Heart right ventricle (tissue), 16 donors: ENCODE measurements at regions of chr3 and their contacts with region 1.

Region 1: DNA sequence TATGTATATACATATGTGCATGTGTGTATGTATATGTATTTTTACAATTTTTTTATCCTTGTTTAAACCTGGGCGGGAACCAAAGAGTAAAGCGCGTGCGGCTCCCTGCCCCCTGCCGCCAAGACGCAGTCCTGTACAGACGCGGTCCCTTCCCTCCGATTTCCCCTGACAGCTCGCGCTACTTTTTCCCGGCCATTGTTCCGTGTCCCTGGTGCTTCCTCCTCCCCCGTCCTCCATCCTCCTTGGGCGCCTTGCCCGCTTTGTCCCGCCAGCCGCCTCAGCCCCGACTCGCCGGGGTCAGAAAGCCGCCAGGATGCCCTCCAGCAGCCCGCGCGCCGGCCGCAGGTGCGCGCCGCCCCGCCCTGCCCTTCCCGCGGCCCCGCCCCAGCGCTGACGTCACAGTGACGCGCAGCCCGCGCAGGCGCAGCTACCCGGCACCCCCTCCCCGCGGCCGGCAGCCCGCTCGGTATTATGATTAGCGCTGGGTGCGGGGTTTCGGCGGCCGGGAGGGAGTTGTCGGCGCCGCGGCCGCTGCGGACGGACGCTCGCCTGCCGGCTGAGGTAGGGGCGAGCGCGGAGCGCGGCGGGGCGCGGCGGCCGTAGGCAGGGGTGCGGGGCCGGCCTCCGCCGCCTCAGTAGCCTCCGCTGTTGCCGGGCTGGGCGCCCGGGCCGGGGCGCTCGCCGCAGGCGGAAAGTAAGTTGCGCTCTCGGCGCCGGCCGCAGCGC is at the start of gene SNRK:
- DNase-seq: peak; percentile 91 to 95
- ATAC-seq: peak; percentile 90 to 98 (median 94)
- H3K4me3 ChIP-seq: peak within 1 kb of the TSS; percentile 38 to 74 (median 68)
- H3K27ac ChIP-seq: peak within 1 kb of the TSS; percentile 89 to 98 (median 93)
- H3K4me1 ChIP-seq: peaks cover 12 to 66% (median 44%) of the 10 kb centered on the region in 9 donors
- H3K27me3 ChIP-seq: no peaks in the 10 kb centered on the region
- CTCF ChIP-seq: peak in 7 of 9 donors; percentile 17 to 70 (median 38)
- total RNA-seq, gene SNRK: 20.9 to 51.9 (median 29.2) TPM

Region 2: DNA sequence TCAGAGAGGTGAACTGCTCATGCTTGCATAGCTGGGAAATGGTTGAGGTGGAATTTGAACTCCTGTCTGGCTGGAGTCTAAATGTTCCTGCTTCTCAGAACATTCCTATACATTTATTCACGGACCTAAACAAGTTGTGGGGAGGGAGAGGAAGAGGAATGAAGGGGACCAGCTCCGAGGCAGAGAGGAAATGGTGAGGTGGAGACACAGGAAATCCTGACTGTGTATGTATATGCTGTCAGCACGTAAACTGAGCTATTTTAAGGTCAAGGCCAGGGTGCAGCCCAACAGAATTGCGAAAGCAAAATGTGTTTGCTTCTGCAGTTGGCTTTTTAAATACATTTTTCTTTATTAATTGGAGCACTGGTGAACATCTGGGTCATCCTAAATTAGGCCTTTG is 106.3 kb before region 1 on chr3:
- intact Hi-C with region 1: loop called in 1 of 10 experiments (anchors 10 kb)
- DNase-seq: peak in 1 of 2 donors; percentile 32
- ATAC-seq: peak in 7 of 8 donors; percentile 55 to 87 (median 76)
- H3K4me3 ChIP-seq: no peak overlapping the region
- H3K27ac ChIP-seq: peak overlapping the region in 9 of 10 donors; percentile 27 to 79 (median 62)
- H3K4me1 ChIP-seq: peaks cover 3 to 57% (median 36%) of the 10 kb centered on the region in 9 donors
- H3K27me3 ChIP-seq: no peaks in the 10 kb centered on the region
- CTCF ChIP-seq: no peak

Region 3: GRCh38 chr3:43223670-43224364 is 62.5 kb before region 1 on chr3:
- intact Hi-C with region 1: loop called in 1 of 10 experiments (anchors 5 kb)
- DNase-seq: no peak
- ATAC-seq: peak in 1 of 8 donors; percentile 45
- H3K4me3 ChIP-seq: no peak overlapping the region
- H3K27ac ChIP-seq: no peak overlapping the region
- H3K4me1 ChIP-seq: no peaks in the 10 kb centered on the region
- H3K27me3 ChIP-seq: no peaks in the 10 kb centered on the region
- CTCF ChIP-seq: peak in 8 of 9 donors; percentile 21 to 72 (median 52)

Region 4: DNA sequence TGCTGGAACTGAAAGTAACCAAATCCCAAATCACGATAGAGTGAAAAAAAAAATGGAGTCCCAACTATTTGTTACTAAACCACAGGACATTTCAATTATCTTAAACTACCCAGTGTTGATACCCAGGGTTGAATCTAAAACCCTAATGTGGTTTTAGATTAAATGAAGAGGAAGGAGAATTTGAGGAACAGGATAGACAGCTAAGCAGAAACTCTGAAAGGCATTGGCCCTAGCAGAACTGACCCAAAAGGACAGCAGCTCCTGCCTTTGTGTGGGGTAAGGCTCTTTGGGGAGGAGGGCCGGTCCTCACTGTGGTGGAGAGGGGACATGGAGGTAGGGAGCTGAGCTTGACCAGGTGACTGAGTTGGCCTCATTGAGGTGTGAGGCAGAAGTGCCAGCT is 30.6 kb before region 1 on chr3:
- intact Hi-C with region 1: no loop called
- DNase-seq: no peak
- ATAC-seq: no peak
- H3K4me3 ChIP-seq: no peak overlapping the region
- H3K27ac ChIP-seq: peak overlapping the region in 1 of 10 donors; percentile 62
- H3K4me1 ChIP-seq: peaks cover 0 to 27% (median 0%) of the 10 kb centered on the region in 9 donors
- H3K27me3 ChIP-seq: no peaks in the 10 kb centered on the region
- CTCF ChIP-seq: no peak

Region 5: DNA sequence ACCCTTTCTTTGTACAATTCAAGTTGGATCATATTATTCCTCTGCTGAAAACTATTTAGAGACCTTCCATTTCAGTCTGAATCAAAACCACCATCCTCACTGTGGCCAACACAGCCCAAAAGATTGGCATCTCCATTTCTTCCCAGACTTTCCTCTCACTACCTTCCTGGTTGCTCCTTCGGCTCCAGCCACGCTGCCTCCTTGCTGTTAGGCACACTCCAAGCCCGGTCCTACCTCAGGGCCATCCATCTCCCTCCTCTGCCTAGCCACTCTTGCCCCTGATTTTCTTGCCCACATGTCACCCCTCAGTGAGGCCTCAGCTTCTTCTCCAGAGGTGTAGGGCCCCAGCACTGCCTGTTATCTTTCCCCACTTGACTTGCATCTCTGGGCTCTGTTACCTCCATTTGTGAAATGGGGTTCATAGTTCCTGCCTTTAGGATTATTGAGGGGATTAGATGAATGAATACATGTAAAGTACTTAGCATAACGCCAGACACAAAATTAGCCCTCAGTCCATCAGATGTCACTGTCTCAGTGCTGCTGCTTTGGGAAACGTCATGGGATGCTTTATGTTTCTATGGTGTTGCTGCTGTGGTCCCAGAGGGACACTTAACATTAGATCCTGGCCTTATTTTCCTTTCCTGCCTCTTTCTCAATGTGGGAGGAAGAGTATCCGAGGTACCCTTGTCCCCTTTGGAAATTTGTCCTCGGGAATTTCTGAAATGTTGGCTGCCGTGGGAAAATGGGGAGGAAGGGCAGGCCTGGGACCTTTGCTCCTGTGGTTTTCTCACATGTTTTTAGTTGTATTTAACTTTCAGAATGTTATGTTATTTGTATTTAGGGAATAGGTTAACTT is 31.4 kb after region 1 on chr3:
- intact Hi-C with region 1: loop called in 1 of 10 experiments (anchors 5 kb)
- DNase-seq: peak in 1 of 2 donors; percentile 38
- ATAC-seq: peak; percentile 63 to 89 (median 78)
- H3K4me3 ChIP-seq: no peak overlapping the region
- H3K27ac ChIP-seq: peak overlapping the region in 9 of 10 donors; percentile 39 to 85 (median 69)
- H3K4me1 ChIP-seq: peaks cover 0 to 87% (median 73%) of the 10 kb centered on the region in 9 donors
- H3K27me3 ChIP-seq: no peaks in the 10 kb centered on the region
- CTCF ChIP-seq: peak in 4 of 9 donors; percentile 5 to 47 (median 32)

Region 6: GRCh38 chr3:43338295-43338694 is 52.0 kb after region 1 on chr3:
- intact Hi-C with region 1: loop called in 1 of 10 experiments (anchors 5 kb)
- DNase-seq: no peak
- ATAC-seq: no peak
- H3K4me3 ChIP-seq: no peak overlapping the region
- H3K27ac ChIP-seq: no peak overlapping the region
- H3K4me1 ChIP-seq: peaks cover 0 to 26% (median 9%) of the 10 kb centered on the region in 9 donors
- H3K27me3 ChIP-seq: no peaks in the 10 kb centered on the region
- CTCF ChIP-seq: no peak

Region 7: GRCh38 chr3:43423142-43423541 is 136.9 kb after region 1 on chr3:
- intact Hi-C with region 1: loop called in 1 of 10 experiments (anchors 10 kb)
- DNase-seq: peak; percentile 23 to 27
- ATAC-seq: peak in 6 of 8 donors; percentile 33 to 58 (median 46)
- H3K4me3 ChIP-seq: no peak overlapping the region
- H3K27ac ChIP-seq: peak overlapping the region in 9 of 10 donors; percentile 8 to 93 (median 80)
- H3K4me1 ChIP-seq: peaks cover 2 to 57% (median 33%) of the 10 kb centered on the region in 9 donors
- H3K27me3 ChIP-seq: no peaks in the 10 kb centered on the region
- CTCF ChIP-seq: no peak

Region 8: DNA sequence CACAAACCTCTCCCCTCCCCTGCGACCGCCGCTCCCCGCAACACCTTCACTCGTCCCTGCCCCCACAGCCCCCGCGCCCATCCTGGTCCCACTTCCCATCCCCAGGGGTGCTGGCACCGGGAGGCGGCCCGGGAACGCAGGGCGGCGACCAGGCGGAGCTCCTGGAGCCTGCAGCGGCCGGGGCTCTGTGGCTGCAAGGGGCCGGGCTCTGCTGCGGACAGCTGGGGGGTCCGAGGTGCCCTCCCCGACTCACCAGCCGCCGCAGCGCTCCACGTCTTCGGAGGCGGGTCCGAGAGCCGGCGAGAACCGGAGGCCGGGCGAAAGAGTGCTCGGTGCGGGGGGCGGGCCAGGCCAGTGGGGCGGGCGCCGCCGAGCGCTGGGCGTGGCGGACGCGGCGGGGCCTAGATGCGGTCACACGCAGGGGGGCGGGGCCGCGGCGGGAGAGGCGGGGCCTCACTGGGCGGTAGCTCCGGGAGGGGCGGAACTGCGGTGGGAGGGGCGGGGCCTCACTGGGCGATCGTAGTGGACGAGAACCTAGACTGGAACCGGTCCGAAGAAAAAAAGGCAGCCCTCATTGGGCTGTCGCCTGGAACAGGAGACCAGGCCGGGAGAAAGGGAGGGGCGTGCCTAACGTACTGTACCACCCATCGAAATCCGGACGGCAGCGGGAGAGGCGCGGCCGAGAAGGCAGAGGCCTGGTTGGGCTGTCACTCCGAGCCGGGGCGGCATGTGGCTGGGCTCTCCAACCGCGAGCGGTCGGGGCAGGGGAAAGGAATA is 335.6 kb after region 1 on chr3 and contains the start of gene ANO10:
- intact Hi-C with region 1: loop called in 1 of 10 experiments (anchors 10 kb)
- DNase-seq: peak; percentile 99
- ATAC-seq: peak; percentile 98 to 100 (median 99)
- H3K4me3 ChIP-seq: peak within 1 kb of the TSS; percentile 64 to 97 (median 88)
- H3K27ac ChIP-seq: peak within 1 kb of the TSS; percentile 14 to 90 (median 82)
- H3K4me1 ChIP-seq: peaks cover 0 to 19% (median 12%) of the 10 kb centered on the region in 9 donors
- H3K27me3 ChIP-seq: no peaks in the 10 kb centered on the region
- CTCF ChIP-seq: no peak
- total RNA-seq, gene ANO10: 7.1 to 24.2 (median 13.3) TPM